ENCODE measurements at regions of chr21 and their contacts with region 1.

Region 1: GRCh38 chr21:28714777-28715464 is 277.8 kb downstream of the LTN1 start:
- DNase-seq: no peak
- H3K4me3 ChIP-seq: no peak overlapping the region
- H3K27ac ChIP-seq: no peak overlapping the region
- H3K27me3 ChIP-seq: no peaks in the 10 kb centered on the region
- CTCF ChIP-seq: no peak

Region 2: DNA sequence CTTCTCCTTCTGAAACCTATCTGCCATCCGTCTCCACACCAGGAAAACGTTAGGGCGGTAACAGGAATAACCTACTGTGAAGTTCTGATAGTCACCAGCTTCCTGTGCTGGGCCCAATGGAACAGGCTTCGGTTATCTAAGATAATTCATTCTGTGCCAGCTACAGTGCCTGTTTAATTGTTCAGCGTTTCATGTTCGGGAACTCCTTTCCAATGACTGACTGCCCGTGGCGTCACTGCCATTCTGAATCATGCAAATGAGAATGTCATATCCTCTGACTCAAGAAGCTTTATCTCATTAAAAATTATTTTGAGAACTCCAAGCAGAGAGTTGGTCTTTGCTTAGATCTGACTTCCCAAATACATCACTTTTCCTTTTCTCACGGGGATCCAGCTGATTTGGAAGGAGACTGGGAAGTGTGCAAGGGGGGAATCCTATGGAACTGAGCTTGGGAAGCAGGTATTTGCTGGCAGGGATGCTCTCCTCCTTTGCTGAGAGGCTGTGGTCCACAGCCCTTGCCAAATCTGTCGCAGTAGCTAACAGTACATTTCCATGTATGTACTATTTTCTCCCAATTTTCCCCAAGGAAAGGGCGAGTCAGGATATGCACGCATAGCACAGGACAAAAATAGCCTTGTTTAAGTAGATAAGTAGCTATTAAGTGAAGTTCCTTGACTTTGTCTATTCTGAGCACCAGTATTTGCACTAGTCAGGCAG is 80.9 kb before region 1 on chr21:
- intact Hi-C with region 1: no loop called
- DNase-seq: no peak
- H3K4me3 ChIP-seq: no peak overlapping the region
- H3K27ac ChIP-seq: peak overlapping the region in 19 of 59 donors; percentile 9 to 78 (median 33)
- H3K27me3 ChIP-seq: no peaks in the 10 kb centered on the region
- CTCF ChIP-seq: no peak

Region 3: GRCh38 chr21:28657566-28657965 is 57.4 kb before region 1 on chr21:
- intact Hi-C with region 1: loop called in 1 of 2 experiments (anchors 10 kb)
- DNase-seq: no peak
- H3K4me3 ChIP-seq: no peak overlapping the region
- H3K27ac ChIP-seq: no peak overlapping the region
- H3K27me3 ChIP-seq: no peaks in the 10 kb centered on the region
- CTCF ChIP-seq: no peak